Mammary epithelial cell (primary cell): ENCODE measurements at regions of chr9 and their contacts with region 1.

Region 1: GRCh38 chr9:135273008-135273407 is 185.5 kb downstream of the OLFM1 start:
- DNase-seq: no peak
- H3K4me3 ChIP-seq: no peak overlapping the region
- H3K27ac ChIP-seq: no peak overlapping the region
- H3K4me1 ChIP-seq: no peaks in the 10 kb centered on the region
- H3K27me3 ChIP-seq: no peaks in the 10 kb centered on the region
- CTCF ChIP-seq: no peak

Region 2: DNA sequence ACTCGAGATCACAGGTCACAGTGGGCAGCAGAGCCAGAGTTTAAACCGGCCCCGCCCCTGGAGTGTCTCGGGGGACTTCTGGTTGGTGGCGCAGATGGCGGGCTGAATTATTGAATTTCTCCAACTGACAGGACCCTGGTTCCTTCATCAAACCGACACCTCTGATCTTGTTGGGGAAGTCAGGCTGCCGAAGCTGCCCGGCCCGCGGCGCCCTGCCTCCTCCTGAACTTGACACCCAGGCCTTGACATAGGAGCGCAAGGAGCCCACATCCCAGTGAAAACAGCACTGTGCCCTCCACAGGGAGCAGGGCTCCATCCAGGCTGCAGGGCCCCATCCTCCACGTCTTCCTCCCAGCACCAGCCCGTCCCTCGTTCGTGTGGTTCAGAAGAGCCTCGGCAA is 80.3 kb before region 1 on chr9:
- CTCF ChIA-PET with region 1: no interaction called
- dilution Hi-C with region 1: loop called (anchors 5 kb)
- in situ Hi-C with region 1: no loop called
- intact Hi-C with region 1: no loop called
- DNase-seq: no peak
- H3K4me3 ChIP-seq: no peak overlapping the region
- H3K27ac ChIP-seq: no peak overlapping the region
- H3K4me1 ChIP-seq: no peaks in the 10 kb centered on the region
- H3K27me3 ChIP-seq: no peaks in the 10 kb centered on the region
- CTCF ChIP-seq: no peak

Region 3: DNA sequence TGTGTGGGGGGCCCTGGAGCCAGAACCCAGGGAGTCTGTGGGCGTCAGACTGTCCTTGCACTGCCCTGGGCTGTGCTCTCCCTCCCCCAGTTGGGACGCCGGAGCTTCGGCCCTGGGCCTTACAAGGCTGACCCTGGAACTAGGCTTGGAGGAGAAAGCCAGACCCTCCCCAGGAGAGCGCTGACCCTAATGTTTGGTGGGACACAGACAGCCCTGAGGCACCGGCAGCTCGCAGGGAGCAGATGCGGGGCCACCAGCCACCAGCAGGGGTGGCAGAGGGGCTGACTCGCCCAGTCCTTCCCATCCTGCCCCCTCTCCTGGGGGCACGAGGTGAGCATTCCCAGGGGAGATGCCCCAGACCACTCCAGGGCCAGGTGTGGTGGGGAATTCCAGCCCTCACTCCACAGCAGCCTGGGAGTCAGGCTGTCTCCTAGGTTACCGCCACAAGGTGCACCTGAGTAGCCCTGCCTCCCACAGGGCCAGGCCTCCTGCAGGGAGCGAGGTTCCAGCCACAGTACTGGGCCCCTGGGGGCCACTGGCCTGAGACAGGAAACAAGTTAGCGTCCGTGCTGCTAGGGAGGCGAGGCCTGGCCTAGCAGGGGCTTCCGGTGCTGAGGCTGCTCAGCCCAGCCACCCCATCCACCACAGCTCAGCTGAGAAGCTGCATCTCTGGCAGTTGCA is 50.9 kb before region 1 on chr9:
- CTCF ChIA-PET with region 1: no interaction called
- dilution Hi-C with region 1: no loop called
- in situ Hi-C with region 1: no loop called
- intact Hi-C with region 1: no loop called
- DNase-seq: no peak
- H3K4me3 ChIP-seq: no peak overlapping the region
- H3K27ac ChIP-seq: no peak overlapping the region
- H3K4me1 ChIP-seq: no peaks in the 10 kb centered on the region
- H3K27me3 ChIP-seq: no peaks in the 10 kb centered on the region
- CTCF ChIP-seq: no peak

Region 4: DNA sequence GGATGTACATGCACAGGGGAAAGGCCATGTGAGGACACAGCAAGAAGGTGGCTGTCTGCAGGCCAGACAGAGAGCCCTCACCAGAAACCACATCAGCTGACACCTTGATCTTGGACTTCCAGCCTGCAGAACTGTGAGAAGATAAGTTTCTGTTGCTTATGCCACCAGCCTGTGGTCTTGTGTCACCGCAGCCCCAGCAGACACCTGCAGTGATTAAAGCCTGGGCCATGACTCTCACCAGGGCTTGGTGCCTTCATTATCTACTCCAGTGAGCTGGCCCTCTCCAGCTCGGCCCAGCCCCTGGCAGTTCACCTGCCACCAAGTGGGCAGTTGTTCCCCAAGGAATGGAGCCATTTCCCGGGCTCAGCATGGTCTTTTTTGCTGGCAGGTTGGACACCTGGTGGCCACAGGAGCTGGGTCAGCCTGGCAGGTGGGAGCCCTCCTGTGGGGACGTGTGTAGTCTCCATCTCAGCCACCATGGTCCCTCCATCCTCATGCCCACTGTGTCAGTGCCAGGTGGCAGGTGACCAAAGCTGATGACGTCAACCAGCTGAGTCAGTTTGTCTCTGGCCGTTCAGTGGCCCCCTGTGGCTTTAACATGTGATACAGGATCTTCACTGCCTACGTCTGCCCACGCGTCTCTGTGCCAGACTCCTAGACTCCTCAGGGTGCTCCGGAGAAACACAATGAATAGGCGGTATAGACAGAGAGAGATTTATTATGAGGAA is 106.7 kb after region 1 on chr9:
- CTCF ChIA-PET with region 1: no interaction called
- dilution Hi-C with region 1: loop called (anchors 5 kb)
- in situ Hi-C with region 1: no loop called
- intact Hi-C with region 1: no loop called
- DNase-seq: no peak
- H3K4me3 ChIP-seq: no peak overlapping the region
- H3K27ac ChIP-seq: no peak overlapping the region
- H3K4me1 ChIP-seq: no peaks in the 10 kb centered on the region
- H3K27me3 ChIP-seq: no peaks in the 10 kb centered on the region
- CTCF ChIP-seq: no peak